ENCODE measurements at regions of chr6 and their contacts with region 1.

Region 1: GRCh38 chr6:118551063-118552053 is 3.3 kb downstream of the PLN start:
- DNase-seq: no peak
- ATAC-seq: peak; percentile 75 to 78
- H3K4me3 ChIP-seq: peak overlapping the region; percentile 74
- H3K27ac ChIP-seq: no peak overlapping the region
- H3K4me1 ChIP-seq: no peaks in the 10 kb centered on the region
- H3K27me3 ChIP-seq: no peaks in the 10 kb centered on the region

Region 2: DNA sequence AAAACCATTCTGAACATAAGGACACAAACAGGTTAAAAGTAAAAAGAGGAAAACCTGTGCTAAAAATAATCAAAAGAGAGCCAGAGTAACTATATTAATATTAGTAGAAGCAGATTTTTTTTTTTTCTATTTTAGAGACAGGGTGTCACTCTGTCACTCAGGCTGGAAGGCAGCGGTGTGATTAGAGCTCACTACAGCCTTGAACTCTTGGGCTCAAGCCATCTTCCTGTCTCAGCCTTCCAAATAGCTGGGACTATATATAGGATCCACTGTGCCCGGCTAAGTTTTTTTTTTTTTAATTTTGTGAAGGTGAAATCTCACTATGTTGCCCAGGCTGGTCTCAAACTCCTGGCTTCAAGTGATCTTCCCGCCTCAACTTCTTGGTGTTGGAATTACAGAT is 36.7 kb before region 1 on chr6:
- intact Hi-C with region 1: loop called in 1 of 4 experiments (anchors 5 kb)
- DNase-seq: peak in 2 of 3 donors; percentile 28 to 66
- ATAC-seq: peak; percentile 94 to 98
- H3K4me3 ChIP-seq: no peak overlapping the region
- H3K27ac ChIP-seq: no peak overlapping the region
- H3K4me1 ChIP-seq: no peaks in the 10 kb centered on the region
- H3K27me3 ChIP-seq: no peaks in the 10 kb centered on the region

Region 3: GRCh38 chr6:118800394-118801071 is 249.2 kb after region 1 on chr6:
- intact Hi-C with region 1: no loop called
- DNase-seq: peak; percentile 67 to 87 (median 69)
- ATAC-seq: peak; percentile 86
- H3K4me3 ChIP-seq: no peak overlapping the region
- H3K27ac ChIP-seq: no peak overlapping the region
- H3K4me1 ChIP-seq: no peaks in the 10 kb centered on the region
- H3K27me3 ChIP-seq: no peaks in the 10 kb centered on the region